K562 (cell line): ENCODE measurements at regions of chr7 and their contacts with region 1.

Region 1: DNA sequence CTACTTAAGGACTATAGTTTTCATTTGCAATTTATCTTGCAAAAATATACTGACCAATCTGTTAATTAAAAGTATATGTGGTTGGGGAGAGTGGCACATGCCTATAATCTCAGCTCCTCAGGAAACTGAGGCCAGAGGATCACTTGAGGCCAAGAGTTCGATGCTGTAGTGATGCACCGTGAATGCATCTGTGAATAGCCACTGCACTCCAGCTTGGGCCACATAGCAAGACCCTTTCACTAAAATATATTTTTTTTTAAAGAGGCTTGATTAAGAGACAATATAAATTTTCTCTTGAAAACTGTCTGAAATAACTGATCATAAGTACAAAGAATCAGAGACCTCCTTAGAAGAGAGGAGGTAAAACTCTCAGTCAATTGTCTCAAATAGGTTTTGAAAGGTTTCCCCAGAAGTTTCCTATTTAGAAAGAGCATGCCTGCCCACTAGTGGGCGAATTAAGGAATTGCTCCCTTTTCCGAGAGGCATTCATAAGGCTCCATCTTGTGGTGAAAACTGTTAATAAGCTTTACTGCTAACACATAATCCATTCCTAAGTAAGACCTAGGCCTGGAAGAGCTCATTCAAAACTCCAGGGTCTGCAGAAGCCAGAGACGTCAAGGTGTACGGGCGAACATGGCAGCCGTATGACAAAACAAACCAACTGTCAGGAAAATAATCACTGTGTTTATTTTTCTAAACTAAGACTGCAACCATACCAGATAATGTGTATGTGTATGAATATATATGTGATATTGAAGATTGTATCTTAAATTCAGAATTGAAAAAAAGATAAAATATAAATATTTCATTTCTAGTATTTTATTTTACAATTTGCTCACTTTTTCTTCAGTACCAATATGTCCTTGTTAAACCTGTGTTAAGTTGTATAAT is 6.8 kb upstream of the TAS2R40 start:
- DNase-seq: peak; percentile 86 to 92 (median 90)
- ATAC-seq: peak; percentile 97
- H3K4me3 ChIP-seq: no peak overlapping the region
- H3K27ac ChIP-seq: no peak overlapping the region
- H3K4me1 ChIP-seq: no peaks in the 10 kb centered on the region
- H3K27me3 ChIP-seq: peaks cover 6 to 19% of the 10 kb centered on the region in 2 experiments; a peak in 4 of 5 replicates
- CTCF ChIP-seq: peak; percentile 100
- EP300 ChIP-seq: no peak
- POLR2A ChIP-seq: no peak
- RAD21 ChIP-seq: peak; percentile 100

Region 2: DNA sequence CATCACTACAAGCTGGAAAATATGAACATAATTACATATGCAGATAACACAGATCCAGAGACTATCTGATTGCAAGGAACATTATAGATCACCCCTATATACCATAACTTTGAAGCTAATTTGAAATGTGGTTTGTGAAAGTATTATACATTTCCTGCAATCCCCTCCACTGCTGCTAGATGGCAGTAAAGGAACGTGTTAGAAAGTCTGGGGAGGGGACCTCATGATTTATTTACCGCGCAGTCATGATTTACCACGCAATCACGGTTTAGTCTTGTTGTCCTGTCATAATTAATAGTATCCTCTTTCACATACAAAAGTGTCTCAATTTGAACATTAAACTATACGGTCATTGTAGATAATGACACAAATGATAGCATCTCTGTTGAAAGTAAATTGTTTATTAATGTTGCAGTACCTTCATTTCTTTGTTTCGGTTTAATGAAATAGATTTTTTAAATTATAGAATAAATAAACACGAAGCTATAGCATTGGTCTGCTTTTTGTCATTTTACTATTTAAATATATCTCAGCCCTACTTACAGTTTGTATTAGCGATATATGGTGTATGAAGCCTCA is 611.1 kb before region 1 on chr7:
- CTCF ChIA-PET with region 1: interaction called, 14 read pairs
- POLR2A ChIA-PET with region 1: no interaction called
- in situ Hi-C with region 1: no loop called
- intact Hi-C with region 1: loop called (anchors 5 kb)
- DNase-seq: peak; percentile 75 to 83 (median 80)
- ATAC-seq: peak; percentile 80
- H3K4me3 ChIP-seq: no peak overlapping the region
- H3K27ac ChIP-seq: no peak overlapping the region
- H3K4me1 ChIP-seq: no peaks in the 10 kb centered on the region; a peak in 1 of 5 replicates
- H3K27me3 ChIP-seq: peaks cover 2 to 10% of the 10 kb centered on the region in 2 experiments; a peak in 2 of 5 replicates
- CTCF ChIP-seq: peak; percentile 85 to 94 (median 90)
- EP300 ChIP-seq: no peak
- POLR2A ChIP-seq: no peak
- RAD21 ChIP-seq: peak; percentile 84 to 93

Region 3: GRCh38 chr7:142853739-142854371 is 361.2 kb before region 1 on chr7:
- CTCF ChIA-PET with region 1: interaction called, 18 read pairs
- POLR2A ChIA-PET with region 1: no interaction called
- in situ Hi-C with region 1: loop called (anchors 5 kb)
- intact Hi-C with region 1: loop called (anchors 2 kb)
- DNase-seq: peak; percentile 74 to 88 (median 80)
- ATAC-seq: peak; percentile 82
- H3K4me3 ChIP-seq: peak overlapping the region; percentile 70
- H3K27ac ChIP-seq: no peak overlapping the region; the same call in 2 of the 3 replicates
- H3K4me1 ChIP-seq: peaks cover 7 to 16% of the 10 kb centered on the region in 2 experiments; a peak in 3 of 5 replicates
- H3K27me3 ChIP-seq: peaks cover 4 to 26% of the 10 kb centered on the region in 2 experiments; a peak in 3 of 5 replicates
- CTCF ChIP-seq: peak; percentile 92 to 95 (median 93)
- EP300 ChIP-seq: no peak
- POLR2A ChIP-seq: no peak
- RAD21 ChIP-seq: peak; percentile 89 to 94

Region 4: GRCh38 chr7:142880876-142881505 is 334.0 kb before region 1 on chr7:
- CTCF ChIA-PET with region 1: interaction called, 3 read pairs
- POLR2A ChIA-PET with region 1: no interaction called
- in situ Hi-C with region 1: loop called (anchors 5 kb)
- intact Hi-C with region 1: loop called (anchors 10 kb)
- DNase-seq: peak; percentile 76 to 87 (median 84)
- ATAC-seq: peak; percentile 82
- H3K4me3 ChIP-seq: no peak overlapping the region
- H3K27ac ChIP-seq: no peak overlapping the region
- H3K4me1 ChIP-seq: peaks cover 0 to 4% of the 10 kb centered on the region in 2 experiments; a peak in 1 of 5 replicates
- H3K27me3 ChIP-seq: peaks cover 54 to 89% of the 10 kb centered on the region in 2 experiments
- CTCF ChIP-seq: peak; percentile 92 to 98 (median 93)
- EP300 ChIP-seq: no peak
- POLR2A ChIP-seq: no peak
- RAD21 ChIP-seq: peak; percentile 75 to 80

Region 5: GRCh38 chr7:143172354-143172753 is 42.7 kb before region 1 on chr7:
- CTCF ChIA-PET with region 1: interaction called, 10 read pairs
- POLR2A ChIA-PET with region 1: no interaction called
- in situ Hi-C with region 1: no loop called
- intact Hi-C with region 1: no loop called
- DNase-seq: no peak
- ATAC-seq: no peak
- H3K4me3 ChIP-seq: no peak overlapping the region
- H3K27ac ChIP-seq: no peak overlapping the region
- H3K4me1 ChIP-seq: no peaks in the 10 kb centered on the region
- H3K27me3 ChIP-seq: no peaks in the 10 kb centered on the region
- CTCF ChIP-seq: no peak
- EP300 ChIP-seq: no peak
- POLR2A ChIP-seq: no peak
- RAD21 ChIP-seq: no peak

Region 6: DNA sequence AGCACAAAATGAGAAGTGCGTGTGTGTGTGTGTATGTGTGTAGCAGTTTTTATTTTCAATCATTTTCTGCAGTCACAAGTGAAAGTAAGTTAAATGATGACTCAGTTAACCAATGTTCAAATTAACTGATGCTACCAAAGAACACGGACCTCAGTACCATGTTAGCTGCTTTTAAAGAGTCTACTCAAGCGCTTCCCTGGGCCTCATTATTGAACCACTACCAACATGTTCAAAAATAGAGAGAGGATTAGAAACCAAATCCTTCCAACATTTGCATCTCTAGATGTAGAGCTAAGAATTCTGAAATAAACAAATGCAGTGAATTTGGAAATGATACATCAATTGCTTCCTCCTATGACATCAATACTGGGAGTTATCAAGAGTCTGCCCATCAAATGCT is 32.0 kb before region 1 on chr7 and contains the start of gene TAS2R39:
- CTCF ChIA-PET with region 1: no interaction called
- POLR2A ChIA-PET with region 1: no interaction called
- in situ Hi-C with region 1: no loop called
- intact Hi-C with region 1: no loop called
- DNase-seq: no peak
- ATAC-seq: no peak
- H3K4me3 ChIP-seq: no peak within 1 kb of the TSS
- H3K27ac ChIP-seq: no peak within 1 kb of the TSS
- H3K4me1 ChIP-seq: no peaks in the 10 kb centered on the region
- H3K27me3 ChIP-seq: peaks cover 0 to 5% of the 10 kb centered on the region in 2 experiments; a peak in 1 of 5 replicates
- CTCF ChIP-seq: no peak
- EP300 ChIP-seq: no peak
- POLR2A ChIP-seq: no peak
- RAD21 ChIP-seq: no peak
- polyA plus RNA-seq, gene TAS2R39: not detected